HEK293 (cell line): ENCODE measurements at regions of chr1 and their contacts with region 1.

Region 1: GRCh38 chr1:223133824-223134435 is 9.1 kb downstream of the TLR5 start:
- H3K4me3 ChIP-seq: peak overlapping the region; percentile 38
- H3K27ac ChIP-seq: no peak overlapping the region
- H3K4me1 ChIP-seq: peaks cover 3% of the 10 kb centered on the region; the same call in 1 of the 2 replicates
- CTCF ChIP-seq: peak; percentile 99

Region 2: DNA sequence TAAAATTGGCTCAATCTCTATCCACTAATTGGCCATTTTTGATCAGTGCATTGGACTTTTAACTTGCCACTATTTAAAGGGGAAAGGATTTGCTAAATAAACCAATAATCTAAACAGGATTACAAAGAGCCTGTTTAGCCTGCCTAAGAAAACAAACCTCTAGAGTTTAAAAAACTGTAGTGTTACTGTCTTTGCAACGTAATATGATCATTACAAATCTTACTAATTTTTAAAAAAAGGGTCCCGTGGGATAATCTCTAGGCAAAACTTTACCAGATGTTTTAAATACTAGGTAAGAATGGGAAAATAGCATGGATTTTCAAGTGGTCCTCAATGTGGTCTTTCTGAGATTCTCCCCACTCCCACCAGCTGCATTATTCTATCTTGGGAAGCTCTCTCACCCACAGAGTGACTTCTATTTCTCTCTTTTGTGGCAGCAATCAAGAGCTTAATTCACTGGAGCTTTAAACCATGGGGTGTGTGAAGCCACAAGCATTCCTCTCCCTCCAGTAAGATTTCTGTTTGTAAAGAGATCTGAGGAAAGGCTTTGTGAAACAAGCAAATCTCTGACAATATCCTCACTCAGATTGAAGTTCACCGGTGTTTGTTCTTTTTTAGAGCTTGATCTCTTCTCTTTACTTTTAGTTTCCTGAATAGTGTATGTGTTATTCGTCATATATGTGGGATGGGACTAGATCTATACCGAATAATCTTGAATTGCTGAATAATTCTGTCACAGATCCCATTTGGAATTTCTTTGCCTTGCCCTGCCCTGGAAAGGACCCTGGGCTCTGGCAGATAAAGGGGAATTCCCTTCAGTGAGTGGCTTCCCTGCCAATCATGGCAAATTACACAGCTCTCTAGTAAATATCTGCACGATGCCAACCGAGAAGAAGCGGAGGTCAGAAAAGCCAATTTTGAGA is 123.1 kb before region 1 on chr1:
- CTCF ChIA-PET with region 1: no interaction called
- POLR2A ChIA-PET with region 1: no interaction called
- H3K4me3 ChIP-seq: no peak overlapping the region
- H3K27ac ChIP-seq: no peak overlapping the region
- H3K4me1 ChIP-seq: peaks cover 11% of the 10 kb centered on the region
- CTCF ChIP-seq: no peak

Region 3: DNA sequence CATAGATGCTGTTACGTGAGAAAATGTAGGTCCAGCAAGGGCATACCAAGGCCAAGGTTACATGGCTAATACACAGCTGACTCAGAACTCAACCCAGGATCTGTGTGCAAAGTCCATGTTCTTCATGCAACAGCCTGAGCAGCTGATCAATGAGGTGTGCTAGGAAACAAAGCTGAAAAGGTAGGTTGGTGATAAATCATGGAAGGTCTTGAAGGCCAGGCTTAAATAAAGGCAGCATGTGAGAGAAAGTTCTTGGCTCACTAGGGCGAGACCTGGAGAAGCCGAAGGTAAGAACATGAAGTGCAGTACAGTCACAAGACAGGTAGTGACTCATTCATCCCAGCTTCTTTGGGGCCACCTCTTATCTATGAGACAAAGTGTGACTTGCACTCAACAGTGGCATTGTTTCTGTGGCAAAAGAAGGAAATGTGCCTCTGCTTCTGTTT is 24.3 kb before region 1 on chr1:
- CTCF ChIA-PET with region 1: interaction called, 33 read pairs
- POLR2A ChIA-PET with region 1: interaction called, 5 read pairs
- H3K4me3 ChIP-seq: no peak overlapping the region
- H3K27ac ChIP-seq: no peak overlapping the region
- H3K4me1 ChIP-seq: no peaks in the 10 kb centered on the region
- CTCF ChIP-seq: no peak

Region 4: DNA sequence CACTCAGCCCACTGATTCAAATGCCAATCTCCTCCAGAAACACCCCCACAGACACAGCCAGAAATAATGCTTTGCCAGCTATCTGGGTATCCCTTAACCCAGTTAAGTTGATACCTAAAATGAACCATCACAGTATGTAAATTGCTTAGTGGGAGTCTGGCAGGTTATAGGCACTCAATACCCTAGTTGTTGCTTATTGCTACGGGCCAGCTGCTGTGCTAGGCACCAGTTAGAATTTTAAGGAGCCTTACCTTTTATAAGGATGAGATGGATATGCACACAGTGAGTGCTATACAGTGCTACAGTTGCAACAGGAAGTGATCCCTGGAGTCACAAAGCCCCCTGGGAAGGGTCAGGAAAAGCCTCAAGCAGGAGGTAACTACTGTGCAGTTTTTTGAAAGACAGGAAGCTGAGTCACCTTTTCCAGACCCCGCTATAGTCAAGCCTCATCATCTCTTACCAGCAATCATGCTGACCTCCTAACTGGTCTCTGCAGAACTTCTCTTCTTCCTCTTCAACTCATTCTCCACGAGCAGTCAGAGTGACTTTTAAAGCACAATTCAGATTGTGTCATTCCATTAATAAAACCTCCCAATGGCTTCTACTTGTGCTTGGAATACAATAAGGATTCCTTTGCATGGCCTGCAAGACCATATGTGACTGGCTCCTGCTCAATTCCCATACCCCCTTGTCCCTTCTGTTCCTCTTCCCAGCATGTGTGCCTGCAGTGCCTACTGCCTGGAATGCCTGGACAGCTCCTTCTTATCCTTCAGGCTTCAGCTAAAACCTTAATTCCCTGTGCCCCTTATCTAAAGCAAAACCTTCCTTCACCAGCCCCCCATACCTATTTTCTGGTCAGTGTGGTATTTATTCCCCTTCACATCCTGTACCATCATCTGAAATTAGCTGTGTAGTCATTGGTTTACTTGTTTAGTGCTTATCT is 19.5 kb after region 1 on chr1:
- CTCF ChIA-PET with region 1: interaction called, 18 read pairs
- POLR2A ChIA-PET with region 1: no interaction called
- H3K4me3 ChIP-seq: no peak overlapping the region
- H3K27ac ChIP-seq: no peak overlapping the region
- H3K4me1 ChIP-seq: no peaks in the 10 kb centered on the region
- CTCF ChIP-seq: no peak

Region 5: DNA sequence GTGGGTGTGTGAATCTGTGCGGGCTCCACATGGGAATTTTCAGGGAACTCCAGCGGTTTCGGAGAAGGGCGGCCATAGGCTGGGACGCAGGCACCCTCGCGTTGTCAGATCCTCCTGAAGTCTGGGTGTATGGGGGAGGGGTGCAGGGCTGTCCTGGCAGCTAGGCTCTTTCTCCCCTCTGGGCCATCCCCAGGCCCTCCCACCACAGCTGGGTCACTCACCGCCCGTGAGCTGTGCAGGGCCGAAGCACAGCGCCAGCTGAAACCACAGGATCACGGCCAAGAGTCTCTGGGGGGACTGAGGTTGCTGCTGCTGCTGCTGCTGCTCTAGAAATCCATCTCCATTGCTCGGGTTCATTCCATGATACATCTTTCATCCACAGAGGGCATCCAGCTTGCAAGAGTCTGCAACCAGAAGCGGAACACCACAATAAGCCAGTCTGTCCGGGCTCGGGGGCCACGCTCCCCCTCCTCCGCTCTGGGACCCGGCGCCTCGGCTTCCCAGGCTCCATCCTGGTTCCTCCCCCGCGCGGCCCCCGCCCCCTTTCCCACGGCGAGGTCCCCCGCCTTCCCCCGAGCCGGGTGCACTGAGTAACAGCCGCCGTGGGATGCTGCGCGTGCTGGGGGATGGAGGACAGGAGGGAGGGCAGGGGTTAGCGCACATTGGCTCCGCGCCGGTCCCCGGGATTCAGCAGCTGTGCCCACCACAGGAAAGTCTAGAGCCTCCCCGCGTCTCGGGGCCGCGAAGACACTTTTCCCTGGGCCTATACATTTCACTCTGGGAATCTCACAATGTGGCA is 229.3 kb after region 1 on chr1:
- CTCF ChIA-PET with region 1: interaction called, 18 read pairs
- POLR2A ChIA-PET with region 1: no interaction called
- H3K4me3 ChIP-seq: peak overlapping the region; percentile 64
- H3K27ac ChIP-seq: no peak overlapping the region; the same call in 1 of the 2 replicates
- H3K4me1 ChIP-seq: peaks cover 8% of the 10 kb centered on the region
- CTCF ChIP-seq: no peak

Region 6: GRCh38 chr1:223628233-223629125 is 494.5 kb after region 1 on chr1:
- CTCF ChIA-PET with region 1: interaction called, 19 read pairs
- POLR2A ChIA-PET with region 1: no interaction called
- H3K4me3 ChIP-seq: no peak overlapping the region
- H3K27ac ChIP-seq: no peak overlapping the region
- H3K4me1 ChIP-seq: no peaks in the 10 kb centered on the region
- CTCF ChIP-seq: peak; percentile 54